ENCODE measurements at regions of chr2 and their contacts with region 1.

Region 1: GRCh38 chr2:46915811-46916630 is 415 bp upstream of the MCFD2 start:
- DNase-seq: peak; percentile 70
- H3K4me3 ChIP-seq: peak overlapping the region; percentile 97
- H3K27me3 ChIP-seq: no peaks in the 10 kb centered on the region
- CTCF ChIP-seq: no peak

Region 2: DNA sequence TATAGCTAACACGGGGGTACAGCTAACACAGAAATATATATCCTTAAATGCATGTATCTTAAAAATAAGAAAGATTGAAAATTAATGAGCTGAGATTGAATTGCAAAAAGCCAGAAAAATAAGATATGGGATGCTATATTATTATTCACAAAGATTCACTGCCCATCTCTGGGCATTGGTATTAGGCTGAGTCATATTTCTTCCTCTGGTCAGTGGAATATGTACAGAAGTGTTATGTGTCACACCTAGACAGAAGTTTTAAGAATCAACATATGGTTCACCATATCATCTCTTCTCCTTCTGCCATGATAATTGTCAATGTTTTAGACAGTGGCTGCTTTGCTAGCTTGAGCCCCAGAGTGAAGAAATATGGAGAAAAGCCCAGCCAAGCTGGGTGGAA is 13.6 kb after region 1 on chr2:
- CTCF ChIA-PET with region 1: interaction called, 43 read pairs
- POLR2A ChIA-PET with region 1: interaction called, 12 read pairs
- DNase-seq: no peak
- H3K4me3 ChIP-seq: no peak overlapping the region
- H3K27me3 ChIP-seq: no peaks in the 10 kb centered on the region
- CTCF ChIP-seq: no peak